ENCODE measurements at regions of chr17 and their contacts with region 1.

Region 1: GRCh38 chr17:3762922-3763776 is 37.8 kb downstream of the ITGAE start:
- DNase-seq: peak in 2 of 3 donors; percentile 40 to 41
- H3K4me3 ChIP-seq: no peak overlapping the region
- H3K4me3 Mint-ChIP-seq: no peak overlapping the region
- H3K27ac ChIP-seq: no peak overlapping the region
- H3K27ac Mint-ChIP-seq: peak overlapping the region in 3 of 7 donors; percentile 19 to 75 (median 60)
- H3K4me1 ChIP-seq: peaks cover 8 to 23% of the 10 kb centered on the region in 2 donors
- H3K4me1 Mint-ChIP-seq: peaks cover 25% of the 10 kb centered on the region
- H3K27me3 ChIP-seq: no peaks in the 10 kb centered on the region
- H3K27me3 Mint-ChIP-seq: peaks cover 0 to 2% (median 2%) of the 10 kb centered on the region in 3 donors
- CTCF ChIP-seq: no peak

Region 2: DNA sequence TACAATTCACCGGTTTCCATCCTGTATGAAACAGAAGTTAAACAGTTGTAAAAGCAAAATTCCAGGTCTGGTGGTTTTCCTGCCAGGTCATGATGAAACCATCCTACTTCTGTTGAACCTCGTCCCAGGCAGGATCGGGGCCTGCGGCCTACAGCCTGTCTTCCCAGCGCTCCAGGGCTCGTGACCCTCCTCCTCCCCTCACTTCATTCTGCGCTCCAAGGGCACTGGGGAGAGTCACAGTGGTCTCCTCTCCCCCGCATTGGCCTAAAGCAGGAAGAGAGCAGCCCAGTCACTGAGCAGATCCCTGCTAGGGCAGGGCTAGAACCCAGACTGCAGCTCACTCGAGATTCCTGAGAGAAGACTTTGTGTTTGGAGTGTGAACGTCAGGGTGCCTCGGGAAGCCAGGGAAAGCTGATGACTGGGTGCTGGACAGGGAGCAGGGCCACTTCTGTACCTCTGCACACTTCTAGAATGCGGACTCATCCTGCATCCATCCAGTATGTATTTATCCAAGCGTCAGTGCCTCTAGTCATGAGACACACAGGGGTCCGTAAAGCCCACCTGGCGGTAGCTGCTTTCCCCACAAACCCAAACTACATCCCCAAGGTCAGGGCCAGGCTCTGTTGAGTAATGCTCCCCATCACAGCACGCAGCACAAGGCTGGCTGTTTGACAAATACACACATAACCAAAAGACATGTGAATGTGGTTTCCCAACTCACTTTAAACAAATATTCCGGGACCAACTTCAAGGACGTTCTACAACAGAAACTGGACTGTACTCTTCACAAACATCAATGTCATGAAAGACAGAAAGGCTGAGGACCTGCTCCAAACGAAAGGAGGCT is 39.5 kb after region 1 on chr17:
- intact Hi-C with region 1: loop called in 1 of 2 experiments (anchors 5 kb)
- DNase-seq: peak; percentile 69 to 76 (median 72)
- H3K4me3 ChIP-seq: peak overlapping the region in 1 of 3 experiments; percentile 58
- H3K4me3 Mint-ChIP-seq: peak overlapping the region; percentile 45 to 80
- H3K27ac ChIP-seq: peak overlapping the region; percentile 94 to 96
- H3K27ac Mint-ChIP-seq: peak overlapping the region; percentile 89 to 99 (median 96)
- H3K4me1 ChIP-seq: peaks cover 70 to 72% of the 10 kb centered on the region in 2 donors
- H3K4me1 Mint-ChIP-seq: peaks cover 67% of the 10 kb centered on the region
- H3K27me3 ChIP-seq: no peaks in the 10 kb centered on the region
- H3K27me3 Mint-ChIP-seq: peaks cover 0 to 2% (median 2%) of the 10 kb centered on the region in 3 donors
- CTCF ChIP-seq: no peak